ENCODE measurements at regions of chr11 and their contacts with region 1.

Region 1: DNA sequence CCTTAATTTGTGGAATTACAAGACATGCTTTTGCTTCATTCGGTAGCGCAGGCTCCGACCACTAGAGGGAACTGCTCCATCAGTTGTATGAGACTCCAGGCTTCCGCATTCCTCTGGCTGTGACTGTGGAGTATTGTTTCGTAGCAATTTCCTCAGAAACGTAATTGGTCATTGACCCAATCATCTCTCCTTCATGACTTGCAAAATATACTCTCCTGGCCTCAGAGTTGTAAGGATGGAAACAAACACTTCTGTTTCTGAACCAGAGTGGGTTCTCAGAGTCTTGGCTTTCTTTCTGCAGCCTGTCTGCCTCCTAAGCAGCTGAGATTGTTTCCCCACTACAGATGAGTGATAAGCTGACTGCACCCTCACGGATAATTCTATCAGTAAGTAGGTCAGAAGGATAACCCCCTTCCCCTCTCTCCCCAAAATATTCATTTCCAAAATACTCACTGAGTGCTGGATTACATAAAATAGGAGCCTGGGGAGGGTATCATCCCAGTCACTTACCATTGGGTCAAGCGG is 146.8 kb upstream of the ZC3H12C start:
- DNase-seq: peak in 8 of 9 experiments; percentile 2 to 62 (median 32)
- ATAC-seq: peak; percentile 61
- H3K4me3 ChIP-seq: no peak overlapping the region
- H3K4me3 Mint-ChIP-seq: peak overlapping the region; percentile 69
- H3K27ac ChIP-seq: no peak overlapping the region
- H3K27ac Mint-ChIP-seq: no peak overlapping the region
- H3K4me1 ChIP-seq: no peaks in the 10 kb centered on the region
- H3K4me1 Mint-ChIP-seq: peaks cover 7% of the 10 kb centered on the region
- H3K27me3 ChIP-seq: no peaks in the 10 kb centered on the region
- H3K27me3 Mint-ChIP-seq: peaks cover 2% of the 10 kb centered on the region
- CTCF ChIP-seq: peak; percentile 27

Region 2: DNA sequence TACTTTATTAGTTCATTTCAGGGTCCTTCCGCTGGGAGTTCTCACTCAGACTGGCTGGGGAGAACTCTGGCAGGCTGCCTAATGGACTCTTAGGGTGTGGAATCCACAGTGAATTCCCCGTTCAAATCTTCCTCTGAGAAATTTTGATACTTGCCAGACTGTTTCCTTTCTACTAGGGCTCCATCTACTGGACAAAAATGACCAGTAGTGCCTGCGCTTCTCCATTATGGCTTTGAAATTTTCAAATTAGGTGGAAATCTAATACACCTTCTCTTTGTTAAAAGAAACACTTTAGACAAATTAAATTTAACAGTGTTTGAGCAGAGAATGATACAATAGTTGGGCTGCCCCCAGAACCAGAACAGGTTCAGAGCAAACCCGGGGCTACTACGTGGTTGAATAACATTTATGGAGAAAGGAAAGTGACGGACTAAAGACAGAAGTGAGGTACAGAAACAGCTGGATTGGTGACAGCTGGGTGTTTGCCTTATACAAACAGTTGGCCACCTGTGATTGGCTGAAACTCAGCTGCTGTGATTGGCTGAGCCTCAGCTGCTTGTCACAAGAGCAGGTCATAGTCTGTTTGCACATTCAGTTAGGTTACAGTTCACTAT is 430.4 kb after region 1 on chr11:
- CTCF ChIA-PET with region 1: no interaction called
- POLR2A ChIA-PET with region 1: no interaction called
- intact Hi-C with region 1: loop called in 1 of 2 experiments (anchors 10 kb)
- DNase-seq: peak in 5 of 9 experiments; percentile 2 to 67 (median 13)
- ATAC-seq: no peak
- H3K4me3 ChIP-seq: no peak overlapping the region
- H3K4me3 Mint-ChIP-seq: no peak overlapping the region
- H3K27ac ChIP-seq: no peak overlapping the region
- H3K27ac Mint-ChIP-seq: no peak overlapping the region
- H3K4me1 ChIP-seq: no peaks in the 10 kb centered on the region
- H3K4me1 Mint-ChIP-seq: peaks cover 4% of the 10 kb centered on the region
- H3K27me3 ChIP-seq: no peaks in the 10 kb centered on the region
- H3K27me3 Mint-ChIP-seq: peaks cover 3% of the 10 kb centered on the region
- CTCF ChIP-seq: peak; percentile 77